Sciatic nerve (tissue), 2 donors: ENCODE measurements at regions of chr6 and their contacts with region 1.

Region 1: DNA sequence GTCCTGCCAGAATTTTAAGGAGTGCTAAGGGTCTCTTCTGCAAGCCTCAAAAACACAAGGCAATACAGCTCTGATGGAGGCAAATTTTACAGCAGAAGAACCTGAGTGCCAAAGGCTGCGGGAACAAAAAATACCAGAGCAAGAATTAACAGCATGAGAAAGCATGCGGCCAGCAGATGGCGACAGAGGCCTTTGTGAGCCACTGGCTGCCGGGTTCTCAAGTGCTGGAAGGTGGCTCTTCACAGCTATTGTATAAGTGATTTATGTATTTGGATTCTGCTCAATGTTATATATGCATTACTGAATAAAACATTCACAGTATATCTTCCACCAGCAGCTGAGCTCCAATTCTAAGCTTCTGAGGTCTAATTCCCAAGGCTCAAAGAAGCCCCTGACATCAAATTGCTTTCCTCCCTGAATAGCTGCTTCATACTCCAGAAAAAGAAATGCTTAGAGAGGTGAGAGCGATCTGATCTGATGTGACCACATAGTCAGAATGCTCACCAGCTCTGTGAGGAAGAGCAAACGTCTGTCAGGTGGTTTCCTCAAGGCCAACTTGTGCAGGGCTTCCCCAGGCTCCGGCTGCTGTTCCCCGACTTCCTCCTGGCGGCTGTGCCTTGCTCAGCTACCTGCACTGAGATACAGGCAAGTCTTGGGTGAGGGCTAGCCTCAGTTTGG is 58.6 kb downstream of the PPP1R3G start:
- DNase-seq: peak; percentile 94
- ATAC-seq: peak; percentile 83

Region 2: DNA sequence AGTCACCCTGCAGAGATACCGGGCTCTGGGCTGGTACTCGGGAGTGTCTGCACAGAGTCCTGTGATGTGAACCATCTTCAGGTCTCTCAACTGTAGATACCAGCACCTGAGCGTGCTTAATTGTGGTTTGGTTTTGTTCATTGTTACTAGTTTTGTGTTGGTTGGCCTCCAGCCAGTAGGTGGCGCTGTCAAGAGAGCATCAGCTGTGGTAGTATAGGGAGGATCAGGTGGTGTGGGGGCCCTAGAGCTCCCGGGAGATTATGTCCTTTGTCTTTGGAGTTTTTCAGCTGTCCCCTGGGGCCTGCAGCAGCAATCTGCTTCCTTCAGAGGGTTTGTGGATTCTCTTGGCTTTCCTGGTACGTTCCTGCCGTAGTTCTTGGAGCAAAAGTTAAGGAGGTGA is 299.7 kb before region 1 on chr6:
- intact Hi-C with region 1: no loop called
- DNase-seq: no peak
- ATAC-seq: no peak

Region 3: GRCh38 chr6:5250911-5251310 is 107.1 kb after region 1 on chr6:
- intact Hi-C with region 1: loop called (anchors 10 kb)
- DNase-seq: no peak
- ATAC-seq: no peak